Transverse colon (tissue), 4 donors: ENCODE measurements at regions of chr7 and their contacts with region 1.

Region 1: GRCh38 chr7:38660427-38661099 is 29.4 kb upstream of the AMPH start:
- DNase-seq: peak; percentile 18
- H3K4me3 ChIP-seq: no peak overlapping the region
- H3K27ac ChIP-seq: no peak overlapping the region
- H3K4me1 ChIP-seq: no peaks in the 10 kb centered on the region
- H3K27me3 ChIP-seq: no peaks in the 10 kb centered on the region
- CTCF ChIP-seq: peak; percentile 62 to 71 (median 63)
- EP300 ChIP-seq: no peak
- POLR2A ChIP-seq: no peak

Region 2: DNA sequence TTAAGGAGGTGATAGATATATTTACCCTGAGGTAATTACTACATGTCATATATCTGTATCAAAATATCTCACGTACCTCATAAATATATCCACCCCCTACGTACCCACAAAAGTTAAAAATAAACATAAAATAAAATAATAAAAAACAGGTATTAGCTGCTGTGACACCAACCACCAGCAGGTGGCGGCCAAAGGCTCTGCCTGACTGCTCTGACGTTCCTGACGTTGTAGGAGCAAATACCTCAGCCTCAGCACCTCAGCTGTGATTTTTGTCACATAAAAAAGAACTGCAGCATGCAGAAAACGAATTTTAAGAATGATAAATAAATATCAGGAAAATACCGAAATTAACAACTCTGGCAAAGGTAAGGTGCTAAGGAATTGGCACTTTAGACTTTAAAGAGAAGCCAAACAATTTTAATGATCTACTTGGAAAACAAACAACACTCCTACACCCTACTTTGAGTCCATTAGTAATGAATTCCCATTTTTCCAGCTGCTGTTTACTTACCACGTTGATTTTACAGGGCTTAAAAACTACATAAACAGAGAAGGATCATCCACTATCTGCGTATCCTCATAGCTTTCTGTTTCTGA is 261.7 kb before region 1 on chr7:
- in situ Hi-C with region 1: loop called in 3 of 4 experiments (anchors 10 to 25 kb)
- intact Hi-C with region 1: no loop called
- DNase-seq: peak; percentile 39
- H3K4me3 ChIP-seq: no peak overlapping the region
- H3K27ac ChIP-seq: no peak overlapping the region
- H3K4me1 ChIP-seq: no peaks in the 10 kb centered on the region
- H3K27me3 ChIP-seq: no peaks in the 10 kb centered on the region
- CTCF ChIP-seq: peak; percentile 73 to 92 (median 80)
- EP300 ChIP-seq: no peak
- POLR2A ChIP-seq: no peak